MCF 10A (cell line): ENCODE measurements at regions of chr6 and their contacts with region 1.

Region 1: DNA sequence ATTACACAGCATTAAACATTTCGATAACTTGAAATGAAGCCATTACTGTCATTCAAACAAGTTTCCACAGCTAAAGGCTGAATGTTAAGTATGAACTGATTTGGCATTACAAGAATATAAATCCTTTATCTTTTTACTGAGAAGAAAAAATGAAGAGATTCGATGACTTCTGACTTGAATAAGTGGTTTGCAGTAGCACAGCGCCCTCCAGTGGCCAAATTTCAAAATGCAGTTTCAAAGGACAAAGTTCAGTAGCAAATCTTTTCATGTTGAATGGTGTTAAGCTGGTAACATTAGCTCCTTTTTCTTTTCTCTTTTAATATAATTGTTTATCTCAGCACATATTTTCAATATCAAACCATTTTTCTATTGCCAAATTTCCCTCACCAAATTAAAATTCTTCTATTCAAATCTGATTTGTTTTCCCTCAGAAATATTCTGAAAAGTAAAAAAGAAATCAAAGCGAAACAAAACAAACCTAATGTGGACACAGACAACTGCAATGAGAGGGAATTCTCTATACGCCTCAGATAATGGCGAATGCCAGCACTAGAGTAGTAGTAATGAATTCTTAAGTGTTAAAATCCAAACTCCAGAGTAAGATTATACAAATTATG is 145.7 kb downstream of the BTBD9 start:
- DNase-seq: peak; percentile 74
- H3K4me3 Mint-ChIP-seq: no peak overlapping the region
- H3K27ac Mint-ChIP-seq: no peak overlapping the region
- H3K4me1 Mint-ChIP-seq: no peaks in the 10 kb centered on the region
- H3K27me3 Mint-ChIP-seq: no peaks in the 10 kb centered on the region
- CTCF ChIP-seq: peak; percentile 89

Region 2: GRCh38 chr6:37791156-37791919 is 702.7 kb before region 1 on chr6:
- CTCF ChIA-PET with region 1: interaction called, 5 read pairs
- POLR2A ChIA-PET with region 1: no interaction called
- intact Hi-C with region 1: loop called (anchors 1 kb)
- DNase-seq: peak; percentile 97
- H3K4me3 Mint-ChIP-seq: no peak overlapping the region
- H3K27ac Mint-ChIP-seq: no peak overlapping the region
- H3K4me1 Mint-ChIP-seq: peaks cover 28% of the 10 kb centered on the region
- H3K27me3 Mint-ChIP-seq: no peaks in the 10 kb centered on the region
- CTCF ChIP-seq: peak; percentile 94

Region 3: DNA sequence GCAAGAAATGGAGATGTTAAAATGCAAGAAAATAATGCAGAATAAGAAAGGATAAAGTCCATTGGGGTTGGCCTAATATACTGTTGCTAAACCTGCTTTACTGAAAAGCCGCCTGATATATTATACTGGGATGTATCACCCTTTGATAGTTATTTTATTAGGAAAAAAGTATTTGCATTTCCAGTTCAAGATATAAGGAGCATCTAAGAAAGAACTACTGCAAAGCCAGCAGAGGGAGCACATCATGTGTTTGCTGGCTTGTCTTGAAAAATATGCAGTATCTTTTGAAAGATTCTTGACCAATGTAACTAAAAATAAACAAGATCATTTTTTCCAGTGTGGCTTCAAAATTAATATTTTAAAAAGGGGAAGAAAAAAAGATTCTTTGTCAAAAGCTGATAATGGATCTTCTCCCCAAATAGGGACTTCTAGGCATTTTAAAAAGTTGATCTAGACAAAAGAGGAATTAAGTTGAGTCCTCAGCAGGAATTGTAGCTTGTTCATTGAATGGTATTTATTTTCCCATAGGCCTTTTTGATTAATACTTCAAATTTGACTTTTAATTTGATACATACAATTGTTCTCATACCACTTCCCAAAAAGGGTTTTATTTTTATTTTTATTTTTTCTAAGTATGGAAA is 459.6 kb before region 1 on chr6:
- CTCF ChIA-PET with region 1: interaction called, 12 read pairs
- POLR2A ChIA-PET with region 1: no interaction called
- intact Hi-C with region 1: loop called (anchors 1 kb)
- DNase-seq: peak; percentile 40
- H3K4me3 Mint-ChIP-seq: no peak overlapping the region
- H3K27ac Mint-ChIP-seq: no peak overlapping the region
- H3K4me1 Mint-ChIP-seq: peaks cover 12% of the 10 kb centered on the region
- H3K27me3 Mint-ChIP-seq: no peaks in the 10 kb centered on the region
- CTCF ChIP-seq: peak; percentile 39

Region 4: GRCh38 chr6:38179794-38180430 is 314.1 kb before region 1 on chr6:
- CTCF ChIA-PET with region 1: interaction called, 3 read pairs
- POLR2A ChIA-PET with region 1: no interaction called
- intact Hi-C with region 1: loop called (anchors 2 kb)
- DNase-seq: no peak
- H3K4me3 Mint-ChIP-seq: no peak overlapping the region
- H3K27ac Mint-ChIP-seq: no peak overlapping the region
- H3K4me1 Mint-ChIP-seq: peaks cover 7% of the 10 kb centered on the region
- H3K27me3 Mint-ChIP-seq: no peaks in the 10 kb centered on the region
- CTCF ChIP-seq: no peak

Region 5: GRCh38 chr6:38370653-38371601 is 123.1 kb before region 1 on chr6:
- CTCF ChIA-PET with region 1: no interaction called
- POLR2A ChIA-PET with region 1: no interaction called
- intact Hi-C with region 1: no loop called
- DNase-seq: no peak
- H3K4me3 Mint-ChIP-seq: no peak overlapping the region
- H3K27ac Mint-ChIP-seq: no peak overlapping the region
- H3K4me1 Mint-ChIP-seq: no peaks in the 10 kb centered on the region
- H3K27me3 Mint-ChIP-seq: no peaks in the 10 kb centered on the region
- CTCF ChIP-seq: no peak

Region 6: DNA sequence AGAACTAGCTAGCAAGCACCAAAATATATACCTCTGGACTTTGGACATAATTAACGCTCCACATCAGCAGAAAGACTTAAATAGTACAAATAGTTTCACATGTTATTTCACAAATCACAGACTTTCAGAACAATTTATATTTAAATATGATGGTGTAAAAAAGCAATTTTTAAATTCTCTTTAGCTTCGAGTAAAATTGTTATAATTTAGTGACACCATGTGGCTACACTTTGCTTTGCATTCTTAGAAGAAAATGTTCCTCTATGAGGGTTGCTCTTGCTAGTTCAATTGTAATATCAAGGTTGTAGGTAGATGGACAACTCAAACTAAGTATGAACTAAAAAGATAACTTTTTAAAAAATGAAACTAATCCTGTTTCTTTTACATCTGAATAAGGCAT is 76.7 kb after region 1 on chr6:
- CTCF ChIA-PET with region 1: interaction called, 3 read pairs
- POLR2A ChIA-PET with region 1: no interaction called
- intact Hi-C with region 1: loop called (anchors 5 kb)
- DNase-seq: peak; percentile 5
- H3K4me3 Mint-ChIP-seq: no peak overlapping the region
- H3K27ac Mint-ChIP-seq: no peak overlapping the region
- H3K4me1 Mint-ChIP-seq: peaks cover 5% of the 10 kb centered on the region
- H3K27me3 Mint-ChIP-seq: no peaks in the 10 kb centered on the region
- CTCF ChIP-seq: peak; percentile 40

Region 7: GRCh38 chr6:38671885-38672467 is 177.9 kb after region 1 on chr6:
- CTCF ChIA-PET with region 1: no interaction called
- POLR2A ChIA-PET with region 1: no interaction called
- intact Hi-C with region 1: loop called (anchors 5 kb)
- DNase-seq: peak; percentile 60
- H3K4me3 Mint-ChIP-seq: no peak overlapping the region
- H3K27ac Mint-ChIP-seq: no peak overlapping the region
- H3K4me1 Mint-ChIP-seq: no peaks in the 10 kb centered on the region
- H3K27me3 Mint-ChIP-seq: no peaks in the 10 kb centered on the region
- CTCF ChIP-seq: peak; percentile 67

Region 8: DNA sequence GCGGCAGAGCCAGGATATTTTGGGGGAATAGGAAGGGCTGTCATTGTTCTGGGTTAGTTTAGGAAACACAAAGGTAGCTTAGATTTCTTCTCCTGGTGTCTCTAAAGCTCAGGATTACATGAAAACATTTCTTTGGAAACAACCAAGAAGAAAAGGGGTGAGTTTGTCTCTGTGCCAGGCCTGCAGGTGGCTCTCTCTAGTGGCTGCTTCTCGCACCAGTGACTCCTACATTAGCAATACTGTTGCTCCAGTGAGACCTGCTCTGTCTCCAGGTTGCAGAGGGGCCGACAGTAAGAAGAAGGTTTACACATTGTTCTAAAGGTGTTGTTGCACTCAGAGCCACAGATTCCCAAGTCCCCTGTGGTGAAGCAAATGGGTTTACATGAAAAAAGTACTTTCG is 449.9 kb after region 1 on chr6:
- CTCF ChIA-PET with region 1: no interaction called
- POLR2A ChIA-PET with region 1: no interaction called
- intact Hi-C with region 1: no loop called
- DNase-seq: peak; percentile 5
- H3K4me3 Mint-ChIP-seq: no peak overlapping the region
- H3K27ac Mint-ChIP-seq: no peak overlapping the region
- H3K4me1 Mint-ChIP-seq: no peaks in the 10 kb centered on the region
- H3K27me3 Mint-ChIP-seq: no peaks in the 10 kb centered on the region
- CTCF ChIP-seq: no peak

Region 9: DNA sequence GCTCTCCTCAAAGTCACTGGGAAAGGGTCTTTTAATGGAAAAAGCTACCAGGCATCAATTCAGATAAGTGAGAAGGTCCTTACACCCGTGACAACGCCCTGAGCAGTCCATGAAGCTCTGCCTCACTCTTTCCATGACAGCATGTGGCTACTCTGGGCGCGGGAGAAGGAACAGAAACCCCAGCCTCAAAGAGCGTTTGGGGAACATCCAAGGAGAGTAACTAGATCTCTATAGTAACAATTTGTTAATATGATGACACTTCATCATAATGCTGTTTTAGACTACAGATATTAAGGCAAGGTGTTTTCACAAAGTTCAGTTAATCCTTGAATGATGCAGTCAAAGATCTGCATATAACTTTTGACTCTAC is 1175.9 kb after region 1 on chr6:
- CTCF ChIA-PET with region 1: no interaction called
- POLR2A ChIA-PET with region 1: no interaction called
- intact Hi-C with region 1: no loop called
- DNase-seq: no peak
- H3K4me3 Mint-ChIP-seq: no peak overlapping the region
- H3K27ac Mint-ChIP-seq: no peak overlapping the region
- H3K4me1 Mint-ChIP-seq: no peaks in the 10 kb centered on the region
- H3K27me3 Mint-ChIP-seq: no peaks in the 10 kb centered on the region
- CTCF ChIP-seq: no peak